MCF 10A (cell line): ENCODE measurements at regions of chr13 and their contacts with region 1.

Region 1: GRCh38 chr13:95191821-95192563 is 109.3 kb downstream of the ABCC4 start:
- DNase-seq: peak; percentile 68
- H3K4me3 Mint-ChIP-seq: no peak overlapping the region
- H3K27ac Mint-ChIP-seq: no peak overlapping the region
- H3K4me1 Mint-ChIP-seq: no peaks in the 10 kb centered on the region
- H3K27me3 Mint-ChIP-seq: no peaks in the 10 kb centered on the region
- CTCF ChIP-seq: peak; percentile 68

Region 2: DNA sequence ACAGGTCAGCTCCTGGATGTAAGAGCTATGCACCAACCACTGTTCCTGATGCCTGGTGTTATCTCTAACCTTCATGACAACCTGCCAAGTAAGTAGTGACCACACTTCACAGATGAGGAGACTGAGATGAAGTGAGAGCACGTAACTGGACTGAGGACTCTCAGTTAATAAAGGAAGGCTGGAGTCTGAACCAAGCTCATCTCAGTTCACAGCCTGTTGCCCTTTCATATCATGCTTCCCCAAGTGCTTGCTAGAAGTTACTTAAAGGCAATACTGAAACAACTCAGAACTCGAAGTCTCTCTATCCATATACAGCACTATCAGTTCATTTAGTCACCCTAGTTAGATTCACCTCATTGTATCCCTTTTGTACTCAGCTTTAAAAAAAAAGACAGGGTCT is 10.4 kb before region 1 on chr13:
- CTCF ChIA-PET with region 1: interaction called, 22 read pairs
- POLR2A ChIA-PET with region 1: no interaction called
- intact Hi-C with region 1: no loop called
- DNase-seq: no peak
- H3K4me3 Mint-ChIP-seq: no peak overlapping the region
- H3K27ac Mint-ChIP-seq: no peak overlapping the region
- H3K4me1 Mint-ChIP-seq: peaks cover 8% of the 10 kb centered on the region
- H3K27me3 Mint-ChIP-seq: no peaks in the 10 kb centered on the region
- CTCF ChIP-seq: no peak

Region 3: GRCh38 chr13:95207769-95208366 is 15.9 kb after region 1 on chr13:
- CTCF ChIA-PET with region 1: interaction called, 17 read pairs
- POLR2A ChIA-PET with region 1: no interaction called
- intact Hi-C with region 1: no loop called
- DNase-seq: no peak
- H3K4me3 Mint-ChIP-seq: no peak overlapping the region
- H3K27ac Mint-ChIP-seq: peak overlapping the region; percentile 13
- H3K4me1 Mint-ChIP-seq: no peaks in the 10 kb centered on the region
- H3K27me3 Mint-ChIP-seq: no peaks in the 10 kb centered on the region
- CTCF ChIP-seq: no peak

Region 4: GRCh38 chr13:95367309-95367843 is 175.4 kb after region 1 on chr13:
- CTCF ChIA-PET with region 1: interaction called, 10 read pairs
- POLR2A ChIA-PET with region 1: no interaction called
- intact Hi-C with region 1: no loop called
- DNase-seq: no peak
- H3K4me3 Mint-ChIP-seq: no peak overlapping the region
- H3K27ac Mint-ChIP-seq: no peak overlapping the region
- H3K4me1 Mint-ChIP-seq: no peaks in the 10 kb centered on the region
- H3K27me3 Mint-ChIP-seq: peaks cover 1% of the 10 kb centered on the region
- CTCF ChIP-seq: no peak

Region 5: DNA sequence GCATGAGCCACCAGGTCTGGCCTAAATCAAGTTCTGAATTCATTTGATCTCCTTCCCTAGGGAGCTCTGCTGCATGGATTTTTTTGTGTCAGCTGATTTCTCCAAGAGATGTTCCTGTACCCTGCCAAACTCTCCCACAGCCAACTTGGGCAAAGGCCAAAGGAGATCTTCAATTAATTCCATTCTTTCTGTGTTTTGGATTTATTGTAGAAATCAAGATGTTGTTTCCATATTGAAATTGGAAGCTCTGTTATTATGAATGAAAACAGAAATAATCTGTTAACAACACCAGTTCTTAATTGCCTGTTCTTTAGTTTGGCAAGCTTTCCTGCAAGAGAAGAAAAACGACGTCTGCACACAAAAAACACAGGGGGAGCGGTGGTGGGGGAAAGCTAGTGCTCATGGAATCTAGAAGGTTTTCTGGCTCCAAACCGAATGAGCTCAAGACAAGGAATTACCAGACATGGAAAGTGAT is 195.8 kb after region 1 on chr13:
- CTCF ChIA-PET with region 1: interaction called, 273 read pairs
- POLR2A ChIA-PET with region 1: interaction called, 3 read pairs
- intact Hi-C with region 1: no loop called
- DNase-seq: no peak
- H3K4me3 Mint-ChIP-seq: no peak overlapping the region
- H3K27ac Mint-ChIP-seq: no peak overlapping the region
- H3K4me1 Mint-ChIP-seq: no peaks in the 10 kb centered on the region
- H3K27me3 Mint-ChIP-seq: peaks cover 36% of the 10 kb centered on the region
- CTCF ChIP-seq: no peak

Region 6: GRCh38 chr13:95603887-95604533 is 412.0 kb after region 1 on chr13:
- CTCF ChIA-PET with region 1: interaction called, 5 read pairs
- POLR2A ChIA-PET with region 1: no interaction called
- intact Hi-C with region 1: loop called (anchors 2 kb)
- DNase-seq: peak; percentile 97
- H3K4me3 Mint-ChIP-seq: peak overlapping the region; percentile 26
- H3K27ac Mint-ChIP-seq: peak overlapping the region; percentile 85
- H3K4me1 Mint-ChIP-seq: peaks cover 56% of the 10 kb centered on the region
- H3K27me3 Mint-ChIP-seq: no peaks in the 10 kb centered on the region
- CTCF ChIP-seq: no peak